Aorta (tissue), 5 donors: ENCODE measurements at regions of chr19 and their contacts with region 1.

Region 1: GRCh38 chr19:15264061-15264932 is 32.0 kb upstream of the EPHX3 start:
- DNase-seq: peak; percentile 86 to 94
- ATAC-seq: peak; percentile 63
- H3K4me3 ChIP-seq: no peak overlapping the region
- H3K27ac ChIP-seq: peak overlapping the region in 1 of 2 donors; percentile 39
- H3K4me1 ChIP-seq: no peaks in the 10 kb centered on the region
- H3K27me3 ChIP-seq: no peaks in the 10 kb centered on the region

Region 2: DNA sequence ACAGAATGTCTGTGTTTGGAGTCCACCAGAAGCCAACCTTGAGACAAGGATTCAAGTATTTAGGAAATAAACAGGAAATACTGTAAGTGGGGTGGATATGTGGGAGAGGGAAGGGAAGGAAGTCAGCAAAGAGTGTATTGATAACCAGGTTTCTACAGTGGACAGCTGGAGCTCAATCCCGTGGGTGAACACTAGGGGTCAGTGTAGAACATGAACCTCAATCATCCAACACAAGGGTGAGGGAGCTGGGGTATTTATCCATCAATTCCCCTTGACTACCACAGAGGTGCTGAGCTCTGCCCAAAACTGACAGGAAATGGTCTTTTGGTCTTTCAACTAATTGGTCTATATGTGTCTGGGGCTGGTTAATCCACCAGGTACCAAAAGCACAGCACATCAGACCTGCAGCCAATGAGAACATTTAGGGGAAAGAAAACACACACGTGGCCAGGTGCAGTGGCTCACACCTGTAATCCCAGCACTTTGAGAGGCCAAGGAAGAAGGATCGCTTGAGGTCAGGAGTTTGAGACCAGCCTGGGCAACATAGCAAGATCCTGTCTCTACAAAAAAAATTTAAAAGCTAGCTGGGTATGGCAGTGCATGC is 162.7 kb before region 1 on chr19:
- intact Hi-C with region 1: loop called in 1 of 2 experiments (anchors 10 kb)
- DNase-seq: peak in 1 of 2 donors; percentile 22
- ATAC-seq: peak; percentile 62
- H3K4me3 ChIP-seq: no peak overlapping the region
- H3K27ac ChIP-seq: no peak overlapping the region
- H3K4me1 ChIP-seq: no peaks in the 10 kb centered on the region
- H3K27me3 ChIP-seq: no peaks in the 10 kb centered on the region

Region 3: GRCh38 chr19:15332311-15332996 is 68.2 kb after region 1 on chr19 and contains the start of gene BRD4:
- intact Hi-C with region 1: loop called (anchors 5 kb)
- DNase-seq: peak; percentile 80 to 91
- ATAC-seq: peak; percentile 85
- H3K4me3 ChIP-seq: peak within 1 kb of the TSS; percentile 99 to 100
- H3K27ac ChIP-seq: peak within 1 kb of the TSS; percentile 99 to 100
- H3K4me1 ChIP-seq: peaks cover 0 to 2% of the 10 kb centered on the region in 2 donors
- H3K27me3 ChIP-seq: no peaks in the 10 kb centered on the region
- total RNA-seq, gene BRD4: 123 to 126 TPM

Region 4: GRCh38 chr19:15432629-15433518 is 168.6 kb after region 1 on chr19:
- intact Hi-C with region 1: loop called in 1 of 2 experiments (anchors 5 kb)
- DNase-seq: peak; percentile 96 to 98
- ATAC-seq: peak; percentile 96
- H3K4me3 ChIP-seq: peak overlapping the region; percentile 46 to 80
- H3K27ac ChIP-seq: peak overlapping the region; percentile 10 to 84
- H3K4me1 ChIP-seq: no peaks in the 10 kb centered on the region
- H3K27me3 ChIP-seq: no peaks in the 10 kb centered on the region